ENCODE measurements at regions of chr20 and their contacts with region 1.

Region 1: GRCh38 chr20:50070991-50071888 is 41.7 kb downstream of the UBE2V1 start:
- DNase-seq: peak; percentile 38
- H3K4me3 ChIP-seq: peak overlapping the region; percentile 56
- H3K27ac ChIP-seq: no peak overlapping the region
- H3K27me3 ChIP-seq: no peaks in the 10 kb centered on the region
- CTCF ChIP-seq: peak; percentile 98

Region 2: DNA sequence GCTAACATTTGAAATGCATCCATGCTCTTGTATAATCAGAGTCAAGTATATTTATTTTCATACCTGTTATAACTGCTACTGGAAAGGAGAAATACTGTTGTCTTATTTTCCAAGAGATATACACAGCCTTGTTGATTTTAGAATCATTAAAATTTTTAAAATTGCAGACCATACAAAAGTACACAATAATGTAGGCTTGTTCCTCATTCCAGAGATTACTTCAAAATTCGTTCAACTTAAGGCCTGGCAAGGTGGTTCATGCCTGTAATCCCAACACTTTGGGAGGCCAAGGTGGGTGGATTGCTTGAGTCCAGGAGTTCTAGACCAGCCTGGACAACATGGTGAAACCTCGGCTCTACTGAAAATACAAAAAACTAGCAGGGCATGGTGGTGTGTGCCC is 128.9 kb before region 1 on chr20:
- CTCF ChIA-PET with region 1: interaction called, 19 read pairs
- POLR2A ChIA-PET with region 1: no interaction called
- DNase-seq: no peak
- H3K4me3 ChIP-seq: no peak overlapping the region
- H3K27ac ChIP-seq: no peak overlapping the region
- H3K27me3 ChIP-seq: no peaks in the 10 kb centered on the region
- CTCF ChIP-seq: no peak

Region 3: GRCh38 chr20:49982346-49983122 is 88.7 kb before region 1 on chr20 and contains the start of gene SNAI1:
- CTCF ChIA-PET with region 1: interaction called, 419 read pairs
- POLR2A ChIA-PET with region 1: interaction called, 38 read pairs
- DNase-seq: peak; percentile 73
- H3K4me3 ChIP-seq: peak within 1 kb of the TSS; percentile 93
- H3K27ac ChIP-seq: peak within 1 kb of the TSS; percentile 39
- H3K27me3 ChIP-seq: peaks cover 6% of the 10 kb centered on the region
- CTCF ChIP-seq: peak; percentile 45
- polyA plus RNA-seq, gene SNAI1: 2.3 and 3.5 TPM in 2 replicates

Region 4: DNA sequence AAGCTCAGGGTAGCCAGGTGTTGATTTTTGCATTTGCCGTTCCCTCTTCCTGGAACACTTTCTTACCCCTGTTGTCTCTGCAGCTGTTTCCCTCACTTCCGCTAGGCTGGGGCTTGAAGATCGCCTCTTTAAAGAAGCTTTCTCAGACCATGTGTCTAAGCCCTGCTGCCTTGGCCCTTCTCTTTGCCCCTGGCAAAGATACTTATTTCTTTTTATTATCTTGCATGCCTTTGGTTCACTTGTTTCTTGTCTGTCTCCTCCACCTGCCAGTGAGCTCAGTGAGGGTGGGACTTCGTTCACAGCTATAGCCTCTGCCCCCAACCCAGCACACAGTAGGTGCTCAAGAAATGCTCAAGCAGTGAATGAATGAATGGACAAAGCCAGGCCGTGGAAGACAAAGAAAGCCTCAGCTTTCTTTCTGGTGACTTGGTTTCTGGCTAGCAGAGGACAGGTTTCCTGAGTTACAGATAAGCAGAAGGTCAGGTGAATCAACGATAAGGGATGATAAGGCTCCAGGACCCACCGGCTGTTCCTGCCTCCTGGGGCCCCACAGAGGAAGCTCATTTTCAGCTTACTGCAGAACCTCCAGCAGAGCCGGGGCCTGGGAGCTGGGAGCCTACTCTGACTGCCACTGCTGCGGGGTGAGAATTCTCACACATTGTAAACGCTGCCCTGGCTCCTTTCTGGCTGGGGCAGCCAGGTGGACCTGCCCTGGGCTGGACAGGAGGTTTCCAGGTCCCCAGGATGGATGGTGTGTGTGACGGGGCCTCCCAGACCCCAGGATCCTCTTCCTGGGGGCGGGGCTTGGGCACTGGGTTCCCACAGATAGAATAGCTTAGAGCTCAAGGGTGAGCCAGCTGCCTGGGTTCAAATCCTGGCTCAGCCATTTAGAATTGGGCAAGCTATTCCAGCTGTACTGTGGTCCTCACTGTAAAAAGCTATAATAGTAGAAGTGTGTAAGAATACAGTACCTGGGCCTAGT is 58.7 kb before region 1 on chr20:
- CTCF ChIA-PET with region 1: interaction called, 14 read pairs
- POLR2A ChIA-PET with region 1: no interaction called
- DNase-seq: no peak
- H3K4me3 ChIP-seq: no peak overlapping the region
- H3K27ac ChIP-seq: no peak overlapping the region
- H3K27me3 ChIP-seq: no peaks in the 10 kb centered on the region
- CTCF ChIP-seq: no peak

Region 5: DNA sequence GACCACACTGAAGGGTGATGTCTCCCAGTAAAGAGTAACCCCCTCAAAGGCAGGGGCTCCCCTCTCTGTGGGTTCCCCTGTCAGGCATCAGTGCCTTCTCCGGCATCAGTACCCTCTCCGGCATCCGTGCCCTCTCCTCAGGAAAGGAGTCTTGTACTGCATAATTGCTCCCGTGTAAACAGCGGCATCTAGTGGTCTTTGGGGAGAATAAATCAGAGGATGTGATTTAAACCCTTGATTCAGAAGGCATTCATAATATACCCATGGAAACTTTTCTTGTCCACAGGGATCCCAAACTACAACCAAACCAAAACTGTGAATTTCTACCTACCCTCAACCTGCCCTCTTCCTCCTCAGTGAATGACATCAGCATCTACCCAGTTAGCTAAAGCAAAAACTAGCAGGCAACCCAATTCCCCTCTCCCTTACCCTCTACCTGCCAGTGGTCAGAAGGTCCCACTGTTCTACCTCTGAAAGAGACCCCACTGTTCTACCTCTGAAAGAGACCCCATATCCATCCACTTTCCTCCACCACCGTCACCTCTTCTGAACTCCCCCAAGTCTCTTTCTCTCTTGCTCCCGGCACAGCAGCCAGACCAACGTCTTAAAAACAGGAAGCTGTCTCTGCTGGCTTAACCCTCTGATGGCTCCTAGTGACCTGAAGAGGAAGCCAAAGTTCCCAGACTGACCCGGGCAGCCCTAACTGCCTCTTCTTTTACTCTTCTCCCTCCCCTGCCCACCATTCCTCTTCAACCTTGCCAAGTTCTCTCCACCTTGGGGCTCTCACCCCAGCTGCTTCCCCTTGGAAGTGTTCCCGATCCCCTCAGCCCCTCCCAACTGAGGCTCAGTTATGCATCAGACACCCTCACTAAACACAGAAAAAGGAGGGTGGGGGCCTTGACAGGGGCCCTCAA is 14.5 kb after region 1 on chr20:
- CTCF ChIA-PET with region 1: interaction called, 45 read pairs
- POLR2A ChIA-PET with region 1: interaction called, 3 read pairs
- DNase-seq: peak; percentile 27
- H3K4me3 ChIP-seq: no peak overlapping the region
- H3K27ac ChIP-seq: peak overlapping the region; percentile 3
- H3K27me3 ChIP-seq: no peaks in the 10 kb centered on the region
- CTCF ChIP-seq: peak; percentile 84

Region 6: DNA sequence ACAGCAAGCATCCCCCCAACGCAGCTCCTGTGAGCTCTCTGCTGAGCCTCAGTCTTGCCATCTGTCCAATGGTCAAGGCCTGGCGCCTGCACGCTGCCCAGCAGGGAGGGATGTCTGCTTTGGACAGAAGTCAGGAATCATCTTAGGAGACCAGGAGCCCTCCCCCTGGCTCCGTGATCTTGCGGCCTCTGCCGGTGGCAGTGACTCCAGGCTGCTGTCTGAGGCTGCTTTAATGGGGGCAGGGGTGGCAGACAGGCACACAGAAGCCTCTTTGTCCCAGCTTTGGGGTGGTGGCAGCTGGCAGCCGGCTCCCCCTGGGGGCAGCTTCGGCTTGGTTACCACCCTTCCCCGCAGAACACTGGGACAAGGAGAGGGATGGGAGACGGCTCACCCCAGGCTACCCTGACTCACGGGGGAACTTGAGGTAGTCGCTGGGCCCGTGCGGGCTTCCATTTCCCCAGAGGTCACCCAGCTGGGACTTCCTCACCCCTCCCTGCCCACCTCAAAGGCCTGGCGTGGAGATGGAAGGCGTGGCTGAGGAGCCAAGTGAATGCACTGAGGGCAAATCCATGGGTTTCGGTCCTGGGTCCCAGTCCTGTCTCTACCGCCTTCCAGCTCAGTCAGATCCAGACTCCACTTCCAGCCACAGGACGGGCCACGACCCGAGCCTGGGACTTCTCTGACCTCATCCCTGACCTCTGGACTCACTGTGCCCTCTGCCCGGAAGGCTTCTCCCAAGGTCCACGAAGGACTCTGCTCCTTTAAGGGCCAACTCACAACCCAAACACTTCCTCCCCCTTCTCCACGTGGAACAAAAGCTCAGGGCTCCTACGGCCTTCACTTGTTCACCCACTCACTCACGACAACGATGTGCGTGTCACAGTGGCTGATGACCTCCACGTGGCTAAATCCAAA is 67.5 kb after region 1 on chr20:
- CTCF ChIA-PET with region 1: no interaction called
- POLR2A ChIA-PET with region 1: no interaction called
- DNase-seq: no peak
- H3K4me3 ChIP-seq: no peak overlapping the region
- H3K27ac ChIP-seq: peak overlapping the region; percentile 31
- H3K27me3 ChIP-seq: no peaks in the 10 kb centered on the region
- CTCF ChIP-seq: no peak

Region 7: DNA sequence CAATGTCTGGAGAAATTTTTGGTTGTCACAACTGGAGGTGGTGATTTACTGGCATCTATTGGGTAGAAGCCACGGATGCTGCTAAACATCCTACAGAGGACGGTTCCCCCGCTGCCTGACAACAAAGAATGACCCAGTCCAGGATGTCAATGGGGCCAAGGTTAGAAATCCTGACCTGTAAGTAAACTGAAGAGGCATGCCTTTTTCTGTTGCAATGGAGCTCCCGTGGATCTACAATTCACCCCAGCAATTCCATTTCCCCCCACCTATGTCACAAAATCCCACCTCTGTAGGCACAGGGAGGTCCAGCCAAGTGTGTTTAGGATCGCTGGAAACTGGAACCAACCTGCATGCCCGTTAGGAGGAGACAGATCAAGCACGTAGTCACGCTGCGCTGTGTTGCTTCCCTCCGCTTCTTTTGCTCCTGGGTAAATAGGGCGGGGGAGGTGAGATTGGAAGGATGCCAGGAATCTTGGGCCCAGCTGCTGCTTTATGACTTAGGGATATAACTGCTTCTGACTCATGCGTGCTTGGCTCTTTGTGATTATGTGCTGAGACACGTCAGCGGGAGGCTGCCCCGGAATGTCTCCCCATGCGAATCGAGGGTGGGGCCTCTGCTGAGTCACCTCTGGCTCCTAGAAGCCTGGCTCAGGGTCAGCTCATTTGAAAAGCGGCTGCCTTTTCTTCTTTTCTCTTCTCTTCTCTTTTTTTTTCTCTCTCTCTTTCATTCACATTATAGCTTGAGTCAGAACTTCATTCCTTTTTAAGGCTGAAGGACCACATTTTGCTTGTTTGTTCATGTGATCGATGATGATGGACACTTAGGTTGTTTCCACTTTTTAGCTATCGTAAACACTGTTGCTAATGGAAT is 94.7 kb after region 1 on chr20:
- CTCF ChIA-PET with region 1: interaction called, 15 read pairs
- POLR2A ChIA-PET with region 1: interaction called, 3 read pairs
- DNase-seq: peak; percentile 100
- H3K4me3 ChIP-seq: peak overlapping the region; percentile 66
- H3K27ac ChIP-seq: peak overlapping the region; percentile 98
- H3K27me3 ChIP-seq: no peaks in the 10 kb centered on the region
- CTCF ChIP-seq: 0 out of 2 replicates have a peak, but pooled peaks have one; percentile 14